H1 (cell line): ENCODE measurements at regions of chr22 and their contacts with region 1.

Region 1: DNA sequence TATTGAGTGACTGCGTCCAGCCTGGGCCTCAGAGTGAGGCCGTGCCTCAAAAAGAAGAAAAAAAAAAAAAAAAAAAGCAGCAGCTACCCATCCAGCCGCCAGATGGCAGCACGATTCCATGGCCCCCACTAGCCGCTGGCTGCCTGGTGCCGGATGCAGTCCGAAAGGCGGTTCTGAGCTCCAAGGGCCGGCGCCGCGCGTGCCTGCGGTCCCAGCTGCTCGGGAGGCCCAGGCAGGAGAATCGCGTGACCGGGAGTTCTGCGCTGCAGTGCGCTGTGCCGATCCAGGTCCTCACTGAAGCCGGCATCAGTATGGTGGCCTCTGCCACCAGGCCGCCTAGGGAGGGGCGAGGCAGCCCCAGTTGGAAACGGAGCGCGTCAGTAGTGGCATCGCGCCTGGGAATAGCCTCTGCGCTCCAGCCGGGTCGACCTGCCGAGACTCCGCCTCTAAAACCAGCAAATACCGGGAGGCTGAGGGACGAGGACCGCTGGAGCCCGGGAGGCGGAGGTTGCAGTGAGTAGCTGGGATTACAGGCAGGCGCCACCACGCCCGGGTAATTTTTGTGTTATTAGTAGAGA is 19.3 kb downstream of the SCARF2 start:
- DNase-seq: peak in 1 of 2 experiments; percentile 87
- H3K4me3 ChIP-seq: peak overlapping the region in 3 of 4 experiments; percentile 32 to 51 (median 37); a peak in 6 of 8 replicates
- H3K27ac ChIP-seq: no peak overlapping the region
- H3K4me1 ChIP-seq: no peaks in the 10 kb centered on the region
- H3K27me3 ChIP-seq: no peaks in the 10 kb centered on the region
- CTCF ChIP-seq: peak; percentile 76 to 95 (median 80)
- EP300 ChIP-seq: no peak
- POLR2A ChIP-seq: no peak
- RAD21 ChIP-seq: peak; percentile 91 to 93

Region 2: DNA sequence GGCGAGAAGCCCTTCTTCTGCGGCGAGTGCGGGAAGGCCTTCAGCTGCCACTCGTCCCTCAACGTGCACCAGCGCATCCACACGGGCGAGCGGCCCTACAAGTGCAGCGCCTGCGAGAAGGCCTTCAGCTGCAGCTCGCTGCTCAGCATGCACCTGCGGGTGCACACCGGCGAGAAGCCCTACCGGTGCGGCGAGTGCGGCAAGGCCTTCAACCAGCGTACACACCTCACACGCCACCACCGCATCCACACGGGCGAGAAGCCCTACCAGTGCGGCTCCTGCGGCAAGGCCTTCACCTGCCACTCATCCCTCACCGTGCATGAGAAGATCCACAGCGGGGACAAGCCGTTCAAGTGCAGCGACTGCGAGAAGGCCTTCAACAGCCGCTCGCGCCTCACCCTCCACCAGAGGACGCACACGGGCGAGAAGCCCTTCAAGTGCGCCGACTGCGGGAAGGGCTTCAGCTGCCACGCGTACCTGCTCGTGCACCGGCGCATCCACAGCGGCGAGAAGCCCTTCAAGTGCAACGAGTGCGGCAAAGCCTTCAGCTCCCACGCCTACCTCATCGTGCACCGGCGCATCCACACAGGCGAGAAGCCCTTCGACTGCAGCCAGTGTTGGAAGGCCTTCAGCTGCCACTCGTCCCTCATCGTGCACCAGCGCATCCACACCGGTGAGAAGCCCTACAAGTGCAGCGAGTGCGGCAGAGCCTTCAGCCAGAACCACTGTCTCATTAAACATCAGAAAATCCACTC is 12.2 kb before region 1 on chr22:
- CTCF ChIA-PET with region 1: interaction called, 27 read pairs
- POLR2A ChIA-PET with region 1: no interaction called
- DNase-seq: no peak
- H3K4me3 ChIP-seq: no peak overlapping the region
- H3K27ac ChIP-seq: no peak overlapping the region
- H3K4me1 ChIP-seq: no peaks in the 10 kb centered on the region
- H3K27me3 ChIP-seq: no peaks in the 10 kb centered on the region
- CTCF ChIP-seq: no peak
- EP300 ChIP-seq: no peak
- POLR2A ChIP-seq: no peak
- RAD21 ChIP-seq: no peak

Region 3: DNA sequence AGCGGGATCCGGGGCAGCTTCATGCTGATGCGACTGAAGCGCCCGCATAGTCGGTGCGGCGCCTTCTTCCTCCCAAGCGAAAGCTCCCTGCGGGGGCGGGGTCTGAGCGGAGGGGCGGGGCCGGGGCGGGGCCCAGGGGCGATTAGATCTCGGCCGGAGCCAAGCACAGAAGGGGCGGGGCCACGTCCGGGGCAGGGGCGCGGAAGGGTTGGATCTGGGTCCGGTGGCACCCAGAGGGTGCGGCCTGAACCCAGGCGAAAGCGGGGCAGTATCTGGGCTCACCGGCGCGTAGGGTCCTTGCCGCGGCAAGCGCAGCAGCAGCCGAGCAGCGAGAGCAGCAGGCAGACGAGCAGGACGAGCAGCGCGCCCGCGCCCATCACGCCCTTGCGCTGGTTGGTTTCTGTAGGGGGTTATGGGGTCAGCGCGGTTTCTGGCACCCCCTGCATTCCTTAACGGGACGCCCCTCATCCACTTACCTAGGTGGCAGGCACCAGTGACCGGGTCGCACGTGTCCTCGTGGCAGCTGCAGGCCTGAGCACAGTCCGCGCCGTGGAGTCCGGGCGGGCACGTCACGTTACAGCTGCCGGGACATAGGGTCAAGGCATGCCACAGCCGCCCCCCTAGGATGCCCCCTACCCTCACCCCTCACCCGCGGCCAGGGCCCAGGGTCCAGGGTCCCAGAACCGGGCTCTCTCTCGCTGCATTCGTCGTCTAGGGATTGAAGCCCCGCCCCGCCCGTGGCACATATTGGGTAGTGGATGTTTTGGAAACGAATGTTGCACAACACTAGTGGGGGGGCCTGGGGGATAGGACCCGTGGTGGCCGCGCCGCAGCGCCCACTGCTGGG is 11.2 kb after region 1 on chr22:
- CTCF ChIA-PET with region 1: interaction called, 15 read pairs
- POLR2A ChIA-PET with region 1: no interaction called
- DNase-seq: peak in 1 of 2 experiments; percentile 90
- H3K4me3 ChIP-seq: peak overlapping the region in 3 of 4 experiments; percentile 14 to 49 (median 26); a peak in 6 of 8 replicates
- H3K27ac ChIP-seq: no peak overlapping the region
- H3K4me1 ChIP-seq: peaks cover 0 to 23% (median 16%) of the 10 kb centered on the region in 4 experiments; a peak in 5 of 7 replicates
- H3K27me3 ChIP-seq: peaks cover 22 to 60% (median 47%) of the 10 kb centered on the region in 4 experiments
- CTCF ChIP-seq: no peak
- EP300 ChIP-seq: no peak
- POLR2A ChIP-seq: no peak
- RAD21 ChIP-seq: no peak

Region 4: GRCh38 chr22:20437613-20438426 is 19.5 kb after region 1 on chr22 and contains the start of gene SCARF2:
- CTCF ChIA-PET with region 1: interaction called, 10 read pairs
- POLR2A ChIA-PET with region 1: interaction called, 3 read pairs
- DNase-seq: peak in 1 of 2 experiments; percentile 80
- H3K4me3 ChIP-seq: peak within 1 kb of the TSS; percentile 50 to 78 (median 56)
- H3K27ac ChIP-seq: no peak within 1 kb of the TSS
- H3K4me1 ChIP-seq: peaks cover 0 to 15% (median 6%) of the 10 kb centered on the region in 4 experiments; a peak in 5 of 7 replicates
- H3K27me3 ChIP-seq: peaks cover 18 to 62% (median 51%) of the 10 kb centered on the region in 4 experiments
- CTCF ChIP-seq: no peak
- EP300 ChIP-seq: no peak; a peak in 1 of 3 replicates
- POLR2A ChIP-seq: no peak
- RAD21 ChIP-seq: no peak
- total RNA-seq, gene SCARF2: 9.8 and 10.0 TPM in 2 replicates

Region 5: DNA sequence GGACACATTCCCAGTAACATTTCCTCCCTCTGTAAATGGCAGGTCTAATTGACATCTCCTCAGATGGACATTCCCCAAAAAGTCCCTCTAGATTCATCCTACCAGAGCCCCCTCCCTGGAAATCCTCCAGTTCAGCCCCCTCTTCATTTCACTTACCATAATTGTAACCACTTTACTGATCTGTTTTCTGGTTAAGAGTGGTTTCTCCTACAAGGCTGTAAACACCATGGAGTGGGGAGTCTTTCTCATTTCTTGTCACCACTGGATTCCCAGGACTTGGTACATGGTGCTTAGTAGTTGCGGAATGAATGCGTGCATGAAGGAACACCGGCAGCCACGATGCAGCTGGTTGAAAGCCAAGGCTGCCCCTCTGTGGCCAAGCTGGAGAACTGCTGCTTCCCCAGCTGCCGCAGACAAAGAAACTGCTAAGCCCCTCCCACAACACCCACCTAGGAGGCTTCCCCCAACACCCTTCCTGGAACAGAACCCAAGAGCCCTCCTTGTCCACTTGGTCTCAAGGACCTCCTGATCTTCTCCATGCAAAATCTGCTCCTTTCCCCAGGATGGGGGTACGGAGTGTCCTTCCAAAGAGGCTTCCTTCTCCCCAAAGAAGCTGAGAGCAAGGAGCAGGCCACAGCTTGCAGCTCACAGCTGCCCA is 37.9 kb after region 1 on chr22:
- CTCF ChIA-PET with region 1: interaction called, 47 read pairs
- POLR2A ChIA-PET with region 1: interaction called, 4 read pairs
- DNase-seq: peak; percentile 71 to 86
- H3K4me3 ChIP-seq: no peak overlapping the region
- H3K27ac ChIP-seq: no peak overlapping the region; the same call in 1 of the 2 replicates
- H3K4me1 ChIP-seq: peaks cover 0 to 2% (median under 1%) of the 10 kb centered on the region in 4 experiments; a peak in 2 of 7 replicates
- H3K27me3 ChIP-seq: no peaks in the 10 kb centered on the region
- CTCF ChIP-seq: peak; percentile 91 to 98 (median 93)
- EP300 ChIP-seq: no peak
- POLR2A ChIP-seq: no peak
- RAD21 ChIP-seq: peak; percentile 96 to 98